A549 (cell line): ENCODE measurements at regions of chr17 and their contacts with region 1.

Region 1: GRCh38 chr17:41801374-41802271 is 10.1 kb downstream of the P3H4 start:
- DNase-seq: peak; percentile 86 to 88
- ATAC-seq: peak; percentile 80 to 86
- H3K4me3 ChIP-seq: no peak overlapping the region
- H3K27ac ChIP-seq: peak overlapping the region; percentile 80 to 86
- H3K4me1 ChIP-seq: peaks cover 23% of the 10 kb centered on the region
- CTCF ChIP-seq: peak; percentile 98
- EP300 ChIP-seq: peak in 1 of 2 experiments; percentile 23; a peak in 1 of 5 replicates
- POLR2A ChIP-seq: no peak
- RAD21 ChIP-seq: peak; percentile 99

Region 2: DNA sequence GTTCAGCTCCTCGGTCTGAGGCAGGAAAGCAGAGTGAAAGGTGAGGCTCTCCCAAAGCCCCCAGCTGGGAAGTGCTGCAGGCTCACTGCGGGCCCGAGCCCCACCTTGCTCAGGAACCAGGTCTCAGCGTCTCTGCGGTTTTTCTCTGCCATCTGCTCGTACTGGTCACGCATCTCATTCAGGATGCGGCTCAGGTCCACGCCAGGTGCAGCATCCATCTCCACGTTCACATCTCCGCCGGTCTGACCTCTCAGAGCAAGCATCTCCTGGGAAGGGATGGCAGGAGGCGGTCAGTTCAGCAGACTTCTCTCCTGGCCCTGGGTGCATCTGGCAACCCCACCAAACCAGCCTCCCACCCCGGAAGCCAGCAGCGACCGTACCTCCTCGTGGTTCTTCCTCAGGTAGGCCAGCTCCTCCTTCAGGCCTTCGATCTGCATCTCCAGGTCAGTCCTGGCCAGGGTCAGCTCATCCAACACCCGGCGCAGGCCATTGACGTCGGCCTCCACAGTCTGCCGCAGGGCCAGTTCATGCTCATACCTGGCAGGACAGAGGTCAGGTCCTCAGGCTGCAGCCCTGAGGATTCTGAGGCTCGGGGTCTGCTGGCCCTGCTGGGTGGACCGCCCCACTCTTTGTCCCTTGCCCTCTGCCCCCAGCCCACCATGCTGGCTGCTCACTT is 190.5 kb before region 1 on chr17:
- CTCF ChIA-PET with region 1: no interaction called
- POLR2A ChIA-PET with region 1: no interaction called
- DNase-seq: no peak
- ATAC-seq: no peak; a peak in 1 of 6 replicates
- H3K4me3 ChIP-seq: no peak overlapping the region
- H3K27ac ChIP-seq: no peak overlapping the region
- H3K4me1 ChIP-seq: peaks cover 12% of the 10 kb centered on the region
- CTCF ChIP-seq: no peak
- EP300 ChIP-seq: no peak
- POLR2A ChIP-seq: no peak
- RAD21 ChIP-seq: no peak

Region 3: GRCh38 chr17:41786227-41787020 is 15.2 kb before region 1 on chr17 and contains the start of gene JUP:
- CTCF ChIA-PET with region 1: interaction called, 3,262 read pairs
- POLR2A ChIA-PET with region 1: interaction called, 50 read pairs
- DNase-seq: peak; percentile 100
- ATAC-seq: peak; percentile 90 to 95
- H3K4me3 ChIP-seq: peak within 1 kb of the TSS; percentile 83
- H3K27ac ChIP-seq: peak within 1 kb of the TSS; percentile 86
- H3K4me1 ChIP-seq: peaks cover 43% of the 10 kb centered on the region
- CTCF ChIP-seq: peak; percentile 96
- EP300 ChIP-seq: no peak; a peak in 1 of 5 replicates
- POLR2A ChIP-seq: peak; percentile 85
- RAD21 ChIP-seq: peak; percentile 42 to 70; a peak in 4 of 5 replicates
- polyA plus RNA-seq, gene JUP: 54.8 and 110 TPM in 2 replicates

Region 4: DNA sequence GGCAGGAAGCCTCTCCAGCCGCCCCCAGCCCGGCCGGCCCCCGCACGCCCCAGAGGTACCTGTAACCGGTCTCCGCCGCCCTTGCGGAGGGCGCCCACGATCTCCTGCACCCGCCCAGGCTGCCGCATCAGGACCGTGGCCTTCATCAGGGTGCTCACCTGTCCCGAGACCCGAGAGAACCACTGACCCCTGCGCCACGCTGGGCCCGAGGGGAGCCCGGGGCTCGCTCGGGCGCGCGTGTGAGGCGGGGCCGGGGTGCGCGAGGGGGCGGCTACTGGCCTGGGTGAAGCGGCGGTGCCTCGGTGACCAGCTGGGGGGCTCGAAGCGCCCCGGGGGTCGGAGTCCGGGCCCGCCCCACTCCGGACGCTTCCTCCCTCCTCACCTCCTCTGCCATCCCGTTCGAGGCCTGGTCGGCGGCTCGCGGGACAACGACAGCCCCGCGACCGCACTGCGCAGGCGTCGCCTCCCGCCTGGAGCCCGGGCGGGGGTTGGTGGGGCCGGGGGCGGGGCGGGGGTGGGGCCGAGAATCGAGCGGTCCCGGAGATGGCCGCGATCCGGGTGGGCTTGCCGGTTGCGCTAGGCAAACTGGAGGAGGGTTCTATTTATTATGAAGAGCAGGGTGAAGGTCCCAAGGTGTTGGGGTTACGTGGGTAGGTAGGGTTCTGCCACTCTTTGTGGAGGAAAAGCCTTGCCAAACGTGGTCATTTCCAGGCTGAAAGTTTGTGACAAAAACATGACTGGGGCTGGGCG is 34.4 kb after region 1 on chr17 and contains the start of gene NT5C3B:
- CTCF ChIA-PET with region 1: interaction called, 19 read pairs
- POLR2A ChIA-PET with region 1: no interaction called
- DNase-seq: peak; percentile 60 to 93
- ATAC-seq: peak; percentile 94
- H3K4me3 ChIP-seq: peak within 1 kb of the TSS; percentile 74
- H3K27ac ChIP-seq: peak within 1 kb of the TSS; percentile 87 to 97
- H3K4me1 ChIP-seq: peaks cover 13% of the 10 kb centered on the region
- CTCF ChIP-seq: no peak
- EP300 ChIP-seq: no peak
- POLR2A ChIP-seq: peak; percentile 85
- RAD21 ChIP-seq: no peak
- polyA plus RNA-seq, gene NT5C3B: 167 and 171 TPM in 2 replicates

Region 5: DNA sequence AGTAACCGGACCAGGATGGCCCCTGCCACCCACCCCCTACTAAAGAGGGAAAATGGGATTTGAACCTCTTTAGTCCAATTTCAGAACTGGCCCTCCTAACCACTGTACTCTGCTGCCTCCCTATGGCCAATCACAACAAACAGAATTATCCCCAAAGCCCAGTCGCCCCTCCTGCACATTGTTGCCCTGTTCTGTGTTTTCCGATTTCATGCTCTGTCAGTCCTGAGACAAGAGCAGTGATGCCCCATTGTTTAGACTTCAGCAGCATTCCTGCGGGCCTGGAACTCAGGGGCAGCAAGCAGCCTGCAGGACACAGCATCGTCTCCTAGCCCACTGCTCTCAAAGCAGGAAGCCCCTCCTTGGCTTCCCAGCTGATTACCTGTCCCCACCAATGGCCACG is 84.1 kb after region 1 on chr17:
- CTCF ChIA-PET with region 1: interaction called, 13 read pairs
- POLR2A ChIA-PET with region 1: no interaction called
- DNase-seq: peak; percentile 48 to 66
- ATAC-seq: peak; percentile 62 to 67
- H3K4me3 ChIP-seq: no peak overlapping the region
- H3K27ac ChIP-seq: peak overlapping the region in 1 of 2 experiments; percentile 1; a peak in 1 of 6 replicates
- H3K4me1 ChIP-seq: peaks cover 10% of the 10 kb centered on the region; the same call in 2 of the 3 replicates
- CTCF ChIP-seq: peak; percentile 54
- EP300 ChIP-seq: no peak
- POLR2A ChIP-seq: no peak
- RAD21 ChIP-seq: peak; percentile 60 to 69